ENCODE measurements at regions of chr6 and their contacts with region 1.

Region 1: GRCh38 chr6:70219943-70220613 is 82.8 kb downstream of the COL9A1 start:
- DNase-seq: no peak
- H3K4me3 ChIP-seq: no peak overlapping the region
- H3K27ac ChIP-seq: no peak overlapping the region
- H3K4me1 ChIP-seq: no peaks in the 10 kb centered on the region
- H3K27me3 ChIP-seq: no peaks in the 10 kb centered on the region
- CTCF ChIP-seq: no peak
- POLR2A ChIP-seq: no peak

Region 2: DNA sequence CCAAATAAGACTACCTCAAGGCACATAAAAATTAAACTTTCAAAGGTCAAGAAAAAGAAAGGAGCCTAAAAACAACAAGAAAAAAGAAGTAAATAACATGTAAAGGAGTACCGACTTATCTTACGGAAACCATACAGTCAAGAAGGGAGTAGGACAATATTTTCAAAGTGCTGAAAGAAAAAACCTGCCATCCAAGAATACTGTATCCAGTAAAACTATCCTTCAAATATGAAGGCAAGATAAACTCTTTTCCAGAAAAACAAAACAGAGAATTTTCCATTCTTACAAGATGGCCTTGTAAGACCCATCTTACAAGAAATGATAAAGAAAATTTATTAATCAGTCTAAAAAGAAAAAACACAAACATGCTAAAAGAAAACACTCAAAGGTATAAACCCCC is 725.5 kb before region 1 on chr6:
- intact Hi-C with region 1: no loop called
- DNase-seq: no peak
- H3K4me3 ChIP-seq: no peak overlapping the region
- H3K27ac ChIP-seq: no peak overlapping the region
- H3K4me1 ChIP-seq: no peaks in the 10 kb centered on the region
- H3K27me3 ChIP-seq: no peaks in the 10 kb centered on the region
- CTCF ChIP-seq: no peak
- POLR2A ChIP-seq: no peak

Region 3: DNA sequence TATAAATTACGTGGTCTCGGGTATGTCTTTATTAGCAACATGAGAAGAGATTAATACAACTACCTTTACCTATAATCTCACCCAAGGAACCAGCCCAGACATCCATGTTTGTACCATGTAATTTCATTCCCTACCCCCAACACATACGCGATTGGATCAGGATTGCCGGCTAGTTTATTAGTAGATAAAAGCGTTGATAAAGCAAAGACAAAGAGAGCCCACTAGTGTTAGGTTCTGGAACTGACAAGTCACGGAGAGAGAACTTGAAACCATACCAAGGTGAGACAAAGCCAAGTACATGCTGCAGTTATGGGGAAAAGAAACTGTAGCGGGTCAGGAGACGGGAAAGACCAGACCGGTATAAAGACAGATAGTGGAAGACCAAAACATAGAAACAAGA is 155.8 kb after region 1 on chr6:
- intact Hi-C with region 1: loop called (anchors 5 kb)
- DNase-seq: no peak
- H3K4me3 ChIP-seq: no peak overlapping the region
- H3K27ac ChIP-seq: no peak overlapping the region
- H3K4me1 ChIP-seq: no peaks in the 10 kb centered on the region
- H3K27me3 ChIP-seq: peaks cover 0 to 6% of the 10 kb centered on the region in 2 donors
- CTCF ChIP-seq: no peak
- POLR2A ChIP-seq: no peak